CD4-positive, alpha-beta memory T cell (primary cell): ENCODE measurements at regions of chr16 and their contacts with region 1.

Region 1: DNA sequence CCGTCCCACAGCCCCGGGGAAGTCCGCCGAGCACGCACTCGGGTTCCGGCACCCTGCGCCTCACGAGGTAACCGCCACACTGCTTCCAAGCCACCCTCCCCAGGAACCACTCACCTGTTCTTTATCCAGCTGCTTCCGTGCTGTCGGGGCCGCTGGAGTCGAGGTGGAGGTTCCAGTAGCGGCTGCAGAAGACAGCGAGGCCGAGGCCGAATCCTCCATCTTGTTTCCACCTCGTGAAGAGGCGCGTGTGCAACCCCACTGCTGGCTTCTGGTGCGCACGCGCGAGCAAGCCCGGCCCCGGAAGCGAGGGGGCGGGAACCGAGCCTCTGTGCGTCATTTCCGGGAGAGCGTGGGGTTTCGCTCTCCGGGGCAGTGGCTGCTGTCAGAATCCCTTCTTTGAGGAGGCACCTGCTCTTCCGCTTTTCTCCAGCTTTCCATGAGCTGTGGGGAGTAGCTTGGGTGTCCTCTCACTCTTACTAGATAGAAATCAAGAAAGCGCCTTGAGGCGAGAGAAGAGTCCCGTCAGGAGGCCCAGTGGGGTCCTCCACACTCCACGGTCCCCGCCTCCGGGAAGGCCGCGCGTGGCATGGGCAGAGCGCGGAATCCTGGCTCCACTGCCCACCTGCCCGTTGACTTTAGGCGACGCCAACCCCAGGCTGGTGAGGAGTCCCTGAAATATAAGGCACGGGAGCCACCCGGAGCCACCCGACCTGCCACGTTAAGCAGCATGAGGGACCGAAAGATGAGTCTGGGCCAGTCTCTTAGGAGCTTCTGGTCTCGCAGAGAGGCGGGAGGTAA is at the start of gene RSL1D1:
- DNase-seq: peak; percentile 92 to 97 (median 95)
- H3K4me3 ChIP-seq: peak within 1 kb of the TSS; percentile 76 to 96
- H3K4me3 Mint-ChIP-seq: peak within 1 kb of the TSS; percentile 98 to 99 (median 99)
- H3K27ac ChIP-seq: peak within 1 kb of the TSS; percentile 94
- H3K27ac Mint-ChIP-seq: peak within 1 kb of the TSS; percentile 97 to 99 (median 98)
- H3K4me1 ChIP-seq: peaks cover 54% of the 10 kb centered on the region
- H3K4me1 Mint-ChIP-seq: peaks cover 27 to 77% (median 47%) of the 10 kb centered on the region in 4 donors
- H3K27me3 ChIP-seq: no peaks in the 10 kb centered on the region
- H3K27me3 Mint-ChIP-seq: no peaks in the 10 kb centered on the region
- total RNA-seq, gene RSL1D1: 180 to 206 TPM

Region 2: GRCh38 chr16:11783319-11784037 is 68.0 kb before region 1 on chr16:
- CTCF ChIA-PET with region 1: no interaction called
- POLR2A ChIA-PET with region 1: interaction called, 3 read pairs
- intact Hi-C with region 1: loop called (anchors 1 kb)
- DNase-seq: peak; percentile 79 to 88 (median 84)
- H3K4me3 ChIP-seq: peak overlapping the region; percentile 58 to 87
- H3K4me3 Mint-ChIP-seq: peak overlapping the region; percentile 82 to 90 (median 86)
- H3K27ac ChIP-seq: peak overlapping the region; percentile 96
- H3K27ac Mint-ChIP-seq: peak overlapping the region; percentile 97 to 100 (median 98)
- H3K4me1 ChIP-seq: peaks cover 75% of the 10 kb centered on the region
- H3K4me1 Mint-ChIP-seq: peaks cover 42 to 66% (median 53%) of the 10 kb centered on the region in 4 donors
- H3K27me3 ChIP-seq: no peaks in the 10 kb centered on the region
- H3K27me3 Mint-ChIP-seq: no peaks in the 10 kb centered on the region

Region 3: DNA sequence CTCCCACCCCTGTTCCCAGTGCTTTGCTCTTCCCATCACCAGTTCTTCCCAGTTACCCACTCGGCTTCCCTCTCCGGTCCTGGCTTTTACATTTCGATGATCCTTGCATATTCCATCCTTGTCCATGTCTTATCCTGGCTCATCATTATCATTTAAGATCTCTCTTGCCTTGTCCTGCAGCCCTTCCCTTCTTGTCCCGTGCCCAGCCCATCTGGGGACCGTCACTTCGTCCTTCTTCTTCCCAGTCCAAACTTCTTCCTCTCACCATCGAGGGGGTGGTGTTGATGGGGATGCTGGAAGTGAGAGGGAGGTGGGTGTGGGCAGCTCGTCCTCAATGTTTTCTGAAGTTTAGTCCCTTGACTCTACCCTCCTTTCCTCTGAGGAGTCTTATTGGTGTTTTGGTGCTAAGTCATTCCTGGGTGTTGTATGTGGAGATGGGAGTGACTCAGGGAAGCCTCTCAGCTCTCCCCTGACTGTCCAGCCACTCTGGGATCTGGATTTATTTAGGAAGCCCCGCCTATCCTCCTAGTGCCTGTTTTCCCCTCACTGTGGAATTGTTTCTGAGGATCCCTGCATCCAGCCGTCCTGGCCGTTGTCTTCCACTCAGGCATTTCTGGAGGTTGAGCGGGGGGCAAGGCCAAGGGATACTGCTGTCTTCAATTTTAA is 126.0 kb after region 1 on chr16:
- CTCF ChIA-PET with region 1: no interaction called
- POLR2A ChIA-PET with region 1: no interaction called
- intact Hi-C with region 1: loop called (anchors 1 kb)
- DNase-seq: no peak
- H3K4me3 ChIP-seq: peak overlapping the region; percentile 84 to 93
- H3K4me3 Mint-ChIP-seq: peak overlapping the region; percentile 89 to 97 (median 94)
- H3K27ac ChIP-seq: peak overlapping the region; percentile 74
- H3K27ac Mint-ChIP-seq: peak overlapping the region; percentile 75 to 94 (median 88)
- H3K4me1 ChIP-seq: peaks cover 28% of the 10 kb centered on the region
- H3K4me1 Mint-ChIP-seq: peaks cover 28 to 39% (median 33%) of the 10 kb centered on the region in 4 donors
- H3K27me3 ChIP-seq: no peaks in the 10 kb centered on the region
- H3K27me3 Mint-ChIP-seq: no peaks in the 10 kb centered on the region